GM18951 (cell line): ENCODE measurements at regions of chr14 and their contacts with region 1.

Region 1: GRCh38 chr14:32576088-32576795 is 247.1 kb downstream of the AKAP6 start:
- POLR2A ChIP-seq: no peak

Region 2: GRCh38 chr14:32683679-32684078 is 107.4 kb after region 1 on chr14:
- in situ Hi-C with region 1: no loop called
- POLR2A ChIP-seq: no peak

Region 3: GRCh38 chr14:34322940-34323418 is 1746.7 kb after region 1 on chr14:
- in situ Hi-C with region 1: loop called (anchors 25 kb)
- POLR2A ChIP-seq: no peak